Sigmoid colon (tissue), 7 donors: ENCODE measurements at regions of chr15 and their contacts with region 1.

Region 1: DNA sequence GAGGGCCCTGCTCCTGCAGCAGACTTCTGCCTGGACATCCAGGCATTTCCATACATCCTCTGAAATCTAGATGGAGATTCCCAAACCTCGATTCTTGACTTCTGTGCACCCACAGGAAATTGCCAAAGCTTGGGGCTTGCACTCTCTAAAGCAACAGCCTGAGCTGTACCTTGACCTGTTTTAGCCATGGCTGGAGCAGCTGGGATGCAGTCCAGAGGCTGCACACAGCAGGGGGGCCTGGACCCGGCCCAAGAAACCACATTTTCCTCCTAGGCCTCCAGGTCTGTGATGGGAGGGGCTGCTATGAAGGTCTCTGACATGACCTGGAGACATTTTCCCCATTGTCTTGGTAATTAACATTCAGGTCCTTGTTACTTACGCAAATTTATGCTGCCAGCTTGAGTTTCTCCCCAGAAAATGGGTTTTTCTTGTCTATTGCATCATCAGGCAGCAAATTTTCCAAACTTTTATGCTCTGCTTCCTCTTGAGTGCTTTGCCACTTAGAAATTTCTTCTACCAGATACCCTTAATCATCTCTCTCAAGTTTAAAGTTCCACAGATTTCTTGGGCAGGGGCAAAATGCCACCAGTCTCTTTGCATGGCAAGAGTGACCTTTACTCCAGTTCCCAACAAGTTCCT is 11.8 kb upstream of the MYO5A start:
- DNase-seq: no peak
- H3K4me3 ChIP-seq: no peak overlapping the region
- H3K27ac ChIP-seq: no peak overlapping the region
- H3K4me1 ChIP-seq: no peaks in the 10 kb centered on the region
- H3K27me3 ChIP-seq: no peaks in the 10 kb centered on the region
- CTCF ChIP-seq: no peak
- EP300 ChIP-seq: no peak
- POLR2A ChIP-seq: no peak

Region 2: GRCh38 chr15:52551762-52552161 is 11.3 kb after region 1 on chr15:
- intact Hi-C with region 1: loop called (anchors 1 kb)
- DNase-seq: no peak
- H3K4me3 ChIP-seq: no peak overlapping the region
- H3K27ac ChIP-seq: no peak overlapping the region
- H3K4me1 ChIP-seq: peaks cover 0 to 16% (median 9%) of the 10 kb centered on the region in 4 donors
- H3K27me3 ChIP-seq: no peaks in the 10 kb centered on the region
- CTCF ChIP-seq: no peak
- EP300 ChIP-seq: no peak
- POLR2A ChIP-seq: no peak